ENCODE measurements at regions of chr7 and their contacts with region 1.

Region 1: DNA sequence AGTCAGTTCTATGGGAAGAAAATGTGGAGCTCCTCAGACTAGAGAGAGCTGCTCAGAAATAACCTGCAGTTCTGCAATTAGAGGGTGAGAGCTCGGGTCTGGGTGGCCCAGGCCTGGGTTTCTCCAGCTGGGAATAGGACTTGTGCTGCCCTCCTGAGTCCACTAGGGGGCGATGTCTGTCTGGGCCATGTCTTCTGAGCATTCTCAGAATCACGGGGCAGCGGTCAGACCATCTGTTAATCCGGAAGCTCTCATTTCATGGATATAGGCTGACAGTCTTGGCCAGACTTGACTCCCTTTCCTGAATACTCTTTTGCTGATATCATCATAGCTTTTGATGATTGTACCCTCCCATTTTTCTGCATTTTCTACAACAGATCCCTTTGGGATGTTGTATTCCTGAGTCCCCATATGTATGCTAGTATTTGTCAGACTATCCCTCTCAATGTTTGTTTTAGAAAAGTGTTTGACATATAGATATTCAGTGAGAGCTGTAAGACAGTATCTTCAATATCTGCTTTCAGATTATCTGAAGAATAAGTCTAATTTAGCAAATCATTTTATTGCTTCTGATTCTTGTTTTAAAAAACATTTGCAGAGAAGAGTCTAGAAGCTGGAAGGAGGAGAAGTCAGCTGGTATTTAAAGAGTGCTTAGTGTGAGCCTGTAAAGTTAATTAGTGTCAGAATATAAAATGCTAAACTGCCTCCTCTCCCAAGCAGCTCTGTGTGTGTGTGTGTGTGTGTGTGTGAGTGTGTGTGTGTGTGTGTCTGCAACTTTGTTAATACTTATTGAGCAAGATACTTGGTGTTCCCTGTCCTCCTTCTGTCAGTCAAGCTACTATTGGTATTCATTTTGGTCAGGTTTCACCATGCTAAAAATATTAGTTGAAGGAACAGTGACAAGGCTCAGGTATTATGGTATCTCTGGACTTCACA is 38.0 kb downstream of the STARD3NL start:
- DNase-seq: peak; percentile 47 to 82
- H3K4me3 ChIP-seq: no peak overlapping the region
- H3K27ac ChIP-seq: no peak overlapping the region
- H3K4me1 ChIP-seq: peaks cover 0 to 9% (median 6%) of the 10 kb centered on the region in 4 experiments; a peak in 4 of 7 replicates
- H3K27me3 ChIP-seq: no peaks in the 10 kb centered on the region
- CTCF ChIP-seq: peak; percentile 92 to 97 (median 93)
- EP300 ChIP-seq: no peak
- POLR2A ChIP-seq: no peak
- RAD21 ChIP-seq: peak; percentile 82 to 89

Region 2: DNA sequence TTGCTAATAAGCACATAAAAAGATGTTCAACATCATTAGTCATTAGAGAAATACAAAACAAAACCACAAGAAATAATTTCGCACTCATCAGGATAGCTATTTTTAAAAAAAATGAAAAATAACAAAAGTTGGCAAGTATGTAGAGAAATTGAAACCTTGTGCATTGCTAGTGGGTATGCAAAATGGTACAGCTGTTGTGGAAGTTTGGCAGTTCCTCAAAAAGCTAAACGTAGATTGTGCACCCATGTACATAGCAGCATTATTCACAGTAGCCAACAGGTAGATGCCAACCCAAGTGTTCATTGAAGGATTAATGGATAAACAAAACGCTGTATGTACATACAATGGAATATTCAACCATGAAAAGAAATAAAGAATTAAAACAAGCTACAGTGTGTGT is 73.3 kb before region 1 on chr7:
- CTCF ChIA-PET with region 1: interaction called, 10 read pairs
- POLR2A ChIA-PET with region 1: no interaction called
- DNase-seq: no peak
- H3K4me3 ChIP-seq: no peak overlapping the region
- H3K27ac ChIP-seq: no peak overlapping the region
- H3K4me1 ChIP-seq: no peaks in the 10 kb centered on the region
- H3K27me3 ChIP-seq: no peaks in the 10 kb centered on the region
- CTCF ChIP-seq: no peak
- EP300 ChIP-seq: no peak
- POLR2A ChIP-seq: no peak
- RAD21 ChIP-seq: no peak

Region 3: DNA sequence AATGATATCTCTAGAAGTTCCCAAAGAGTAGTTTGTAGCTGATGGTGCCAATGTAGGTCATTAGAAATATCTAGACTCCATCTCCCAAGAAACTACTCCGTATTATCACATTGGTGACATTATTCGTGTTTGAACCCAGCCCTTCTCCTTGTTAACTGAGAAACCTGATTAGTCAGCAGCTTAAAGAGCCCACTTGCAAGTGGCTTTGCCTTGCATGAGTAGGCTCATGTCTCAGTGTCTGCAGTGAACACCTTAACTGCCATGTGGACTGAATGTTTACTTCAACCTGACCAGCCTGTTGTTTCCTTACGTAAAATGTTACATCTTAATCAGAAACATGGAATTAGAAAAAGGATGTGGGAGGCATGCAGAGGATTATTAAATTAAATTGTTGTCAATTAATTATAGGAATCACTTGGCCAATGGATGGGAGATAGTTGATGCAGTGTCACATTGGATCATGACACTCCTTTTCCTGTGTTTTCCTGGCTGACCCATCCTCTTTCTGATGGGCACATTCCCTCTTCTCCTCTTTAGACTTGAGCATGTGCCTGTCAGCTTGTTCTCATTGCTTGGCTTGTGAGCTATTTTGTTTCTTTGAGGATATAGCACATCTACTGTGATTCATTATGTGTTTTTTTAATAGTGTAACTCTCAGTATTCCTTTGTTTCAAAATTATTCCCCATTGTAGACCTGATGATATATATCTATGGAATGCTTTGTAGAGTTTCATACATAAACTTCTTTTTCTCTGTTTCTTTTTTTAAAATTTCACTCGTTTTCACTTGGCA is 20.0 kb before region 1 on chr7:
- CTCF ChIA-PET with region 1: interaction called, 54 read pairs
- POLR2A ChIA-PET with region 1: interaction called, 6 read pairs
- DNase-seq: no peak
- H3K4me3 ChIP-seq: no peak overlapping the region
- H3K27ac ChIP-seq: no peak overlapping the region
- H3K4me1 ChIP-seq: peaks cover 0 to 6% (median 3%) of the 10 kb centered on the region in 4 experiments; a peak in 2 of 7 replicates
- H3K27me3 ChIP-seq: no peaks in the 10 kb centered on the region
- CTCF ChIP-seq: no peak
- EP300 ChIP-seq: no peak
- POLR2A ChIP-seq: no peak
- RAD21 ChIP-seq: no peak

Region 4: DNA sequence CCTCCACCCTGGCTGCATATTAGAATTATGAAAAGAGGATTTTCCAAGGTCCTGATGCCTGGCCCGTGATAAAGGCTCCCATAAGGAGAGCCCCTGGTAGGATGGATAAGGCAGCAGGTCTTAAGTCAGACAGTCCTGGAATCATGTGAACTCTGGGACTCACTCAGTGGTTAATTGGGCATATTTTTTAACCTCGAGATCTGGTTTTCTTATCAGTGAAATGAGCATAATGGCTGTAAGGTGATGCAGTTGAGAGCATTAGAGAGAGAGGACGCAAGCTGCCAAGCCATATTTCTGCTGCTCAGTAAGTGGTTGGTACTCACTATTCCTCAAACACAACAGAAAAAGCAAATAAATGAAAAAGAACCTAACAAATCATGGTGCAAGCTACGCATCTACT is 19.6 kb after region 1 on chr7:
- CTCF ChIA-PET with region 1: interaction called, 14 read pairs
- POLR2A ChIA-PET with region 1: no interaction called
- DNase-seq: no peak
- H3K4me3 ChIP-seq: no peak overlapping the region
- H3K27ac ChIP-seq: no peak overlapping the region
- H3K4me1 ChIP-seq: no peaks in the 10 kb centered on the region
- H3K27me3 ChIP-seq: no peaks in the 10 kb centered on the region
- CTCF ChIP-seq: no peak
- EP300 ChIP-seq: no peak
- POLR2A ChIP-seq: no peak
- RAD21 ChIP-seq: no peak

Region 5: GRCh38 chr7:38248069-38248567 is 32.1 kb after region 1 on chr7:
- CTCF ChIA-PET with region 1: no interaction called
- POLR2A ChIA-PET with region 1: no interaction called
- DNase-seq: no peak
- H3K4me3 ChIP-seq: no peak overlapping the region
- H3K27ac ChIP-seq: no peak overlapping the region
- H3K4me1 ChIP-seq: no peaks in the 10 kb centered on the region
- H3K27me3 ChIP-seq: peaks cover 0 to 1% (median 0%) of the 10 kb centered on the region in 4 experiments; a peak in 1 of 7 replicates
- CTCF ChIP-seq: no peak
- EP300 ChIP-seq: no peak
- POLR2A ChIP-seq: no peak
- RAD21 ChIP-seq: no peak

Region 6: GRCh38 chr7:38318803-38319416 is 102.9 kb after region 1 on chr7:
- CTCF ChIA-PET with region 1: interaction called, 68 read pairs
- POLR2A ChIA-PET with region 1: no interaction called
- DNase-seq: peak in 1 of 2 experiments; percentile 83
- H3K4me3 ChIP-seq: no peak overlapping the region
- H3K27ac ChIP-seq: no peak overlapping the region
- H3K4me1 ChIP-seq: peaks cover 0 to 4% (median under 1%) of the 10 kb centered on the region in 4 experiments; a peak in 2 of 7 replicates
- H3K27me3 ChIP-seq: no peaks in the 10 kb centered on the region
- CTCF ChIP-seq: peak; percentile 30 to 81 (median 72)
- EP300 ChIP-seq: 0 out of 3 replicates have a peak, but pooled peaks of 1 of the 2 experiments have one; percentile 38
- POLR2A ChIP-seq: no peak
- RAD21 ChIP-seq: peak; percentile 83 to 86

Region 7: DNA sequence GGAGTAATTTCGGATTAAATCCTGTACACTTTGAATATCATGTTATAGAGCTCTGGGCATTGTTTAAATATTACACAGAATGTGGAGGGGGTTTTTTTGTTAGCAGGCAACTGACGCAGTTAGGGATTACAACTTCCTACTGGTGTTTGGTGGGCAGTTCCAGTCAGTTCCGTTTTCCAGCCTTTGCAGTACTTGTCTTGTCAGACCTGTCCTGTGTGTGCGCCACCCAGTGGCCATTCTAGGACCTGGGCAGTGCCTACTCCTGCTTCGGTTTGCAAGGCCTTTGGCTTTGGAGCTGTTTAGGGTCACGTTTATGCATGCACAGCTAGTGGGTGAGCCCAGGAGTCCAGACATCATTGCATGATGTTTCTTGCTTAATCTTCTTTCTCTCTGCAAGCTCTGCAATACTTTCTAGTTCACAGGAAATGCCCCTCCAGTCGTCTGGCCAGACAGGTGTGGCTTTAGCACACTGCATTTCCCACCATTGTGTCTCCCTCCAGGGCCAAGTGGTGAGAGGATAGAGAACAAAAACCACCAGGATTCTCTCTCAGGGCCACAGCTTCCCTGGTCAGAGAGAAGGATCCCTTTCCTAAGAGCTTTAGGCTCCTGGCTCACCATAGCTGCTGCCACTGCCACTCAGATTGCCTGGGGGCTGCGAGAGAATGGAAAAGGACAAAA is 154.0 kb after region 1 on chr7:
- CTCF ChIA-PET with region 1: interaction called, 30 read pairs
- POLR2A ChIA-PET with region 1: no interaction called
- DNase-seq: peak; percentile 85 to 93
- H3K4me3 ChIP-seq: no peak overlapping the region
- H3K27ac ChIP-seq: no peak overlapping the region
- H3K4me1 ChIP-seq: peaks cover 0 to 6% (median under 1%) of the 10 kb centered on the region in 4 experiments; a peak in 2 of 7 replicates
- H3K27me3 ChIP-seq: no peaks in the 10 kb centered on the region
- CTCF ChIP-seq: peak; percentile 93 to 100 (median 95)
- EP300 ChIP-seq: no peak
- POLR2A ChIP-seq: no peak
- RAD21 ChIP-seq: peak; percentile 28 to 43; a peak in 3 of 4 replicates